Activated CD4-positive, alpha-beta memory T cell treated with anti-CD3 and anti-CD28 coated beads, Interleukin-2, amount 10 ng/mL, durations not matched to agents 7 days and 5 days (primary cell): ENCODE measurements at regions of chr7 and their contacts with region 1.

Region 1: GRCh38 chr7:5567790-5568189 is 144.2 kb upstream of the TNRC18 start:
- DNase-seq: no peak
- H3K4me3 Mint-ChIP-seq: no peak overlapping the region
- H3K27ac Mint-ChIP-seq: no peak overlapping the region
- H3K4me1 Mint-ChIP-seq: peaks cover 29% of the 10 kb centered on the region
- H3K27me3 Mint-ChIP-seq: peaks cover 27% of the 10 kb centered on the region

Region 2: GRCh38 chr7:5580714-5581395 is 13.1 kb after region 1 on chr7:
- CTCF ChIA-PET with region 1: no interaction called
- POLR2A ChIA-PET with region 1: no interaction called
- DNase-seq: no peak
- H3K4me3 Mint-ChIP-seq: no peak overlapping the region
- H3K27ac Mint-ChIP-seq: no peak overlapping the region
- H3K4me1 Mint-ChIP-seq: peaks cover 23% of the 10 kb centered on the region
- H3K27me3 Mint-ChIP-seq: peaks cover 56% of the 10 kb centered on the region

Region 3: DNA sequence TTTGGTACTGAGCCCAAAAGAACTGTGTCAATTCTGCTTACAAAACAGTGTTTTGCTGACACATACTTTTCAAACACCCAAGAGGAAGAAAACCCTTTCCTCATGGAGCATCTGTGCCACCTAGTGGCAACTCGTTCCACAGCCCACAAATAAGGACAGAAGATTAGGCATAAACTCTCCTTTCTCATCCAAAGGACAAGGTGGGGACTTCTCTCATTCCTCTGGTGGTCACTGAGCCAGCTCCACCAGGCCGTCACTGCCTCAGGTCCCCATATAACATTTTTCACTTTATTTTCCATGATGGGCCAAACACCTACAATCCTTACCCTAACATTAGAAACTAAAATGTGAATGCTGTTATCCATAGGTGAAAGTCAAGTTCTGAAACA is 136.7 kb after region 1 on chr7:
- CTCF ChIA-PET with region 1: interaction called, 10 read pairs
- POLR2A ChIA-PET with region 1: no interaction called
- DNase-seq: peak; percentile 79
- H3K4me3 Mint-ChIP-seq: no peak overlapping the region
- H3K27ac Mint-ChIP-seq: no peak overlapping the region
- H3K4me1 Mint-ChIP-seq: peaks cover 34% of the 10 kb centered on the region
- H3K27me3 Mint-ChIP-seq: peaks cover 8% of the 10 kb centered on the region